ENCODE measurements at regions of chr1 and their contacts with region 1.

Region 1: GRCh38 chr1:234398849-234399381 is 25.7 kb downstream of the COA6 start:
- DNase-seq: no peak
- H3K4me3 Mint-ChIP-seq: peak overlapping the region; percentile 62
- H3K27ac Mint-ChIP-seq: peak overlapping the region; percentile 85
- H3K4me1 Mint-ChIP-seq: peaks cover 49% of the 10 kb centered on the region
- H3K27me3 Mint-ChIP-seq: no peaks in the 10 kb centered on the region

Region 2: GRCh38 chr1:234427950-234428642 is 29.2 kb after region 1 on chr1:
- intact Hi-C with region 1: no loop called
- DNase-seq: no peak
- H3K4me3 Mint-ChIP-seq: no peak overlapping the region
- H3K27ac Mint-ChIP-seq: peak overlapping the region; percentile 49
- H3K4me1 Mint-ChIP-seq: peaks cover 17% of the 10 kb centered on the region
- H3K27me3 Mint-ChIP-seq: no peaks in the 10 kb centered on the region

Region 3: DNA sequence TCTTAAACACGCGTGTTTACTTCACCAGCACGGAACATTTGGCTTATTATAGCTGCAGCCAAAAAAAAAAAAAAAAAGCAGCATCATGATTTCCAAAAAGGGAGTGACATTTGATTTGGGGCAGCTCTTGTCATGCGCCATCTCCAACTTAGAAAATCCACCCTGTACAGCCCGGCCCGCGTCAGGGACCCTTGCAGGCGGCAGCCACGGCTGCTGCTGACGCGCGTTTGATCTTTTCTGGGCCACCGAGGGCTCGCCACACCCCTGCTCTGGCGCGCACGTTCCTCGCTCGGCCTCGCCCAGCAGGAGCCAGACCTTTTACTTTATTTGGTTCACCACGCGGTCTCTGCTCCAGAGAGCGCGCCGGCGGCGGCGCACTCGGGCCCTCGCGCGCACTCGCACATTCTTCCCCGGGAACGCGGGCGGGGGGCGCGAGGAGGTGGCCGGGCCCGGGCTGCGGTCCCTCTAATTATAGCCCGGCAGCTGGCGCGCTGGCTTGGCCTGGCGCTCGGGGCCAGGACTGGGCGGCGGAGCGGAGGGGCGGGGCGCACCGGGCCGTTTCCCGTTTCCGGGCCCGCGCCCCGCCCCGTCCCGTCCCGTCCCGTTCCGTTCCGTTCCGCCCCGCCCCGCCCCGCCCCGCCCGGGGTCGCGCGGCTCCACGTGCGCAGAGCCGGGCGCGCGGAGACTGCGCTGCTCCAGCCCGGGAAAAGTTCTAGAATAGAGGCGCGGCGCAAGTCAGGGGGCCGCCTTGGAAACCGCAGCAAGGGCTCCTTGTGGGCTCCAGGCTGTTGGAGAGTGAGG is 200.9 kb after region 1 on chr1:
- intact Hi-C with region 1: loop called (anchors 10 kb)
- DNase-seq: peak; percentile 70
- H3K4me3 Mint-ChIP-seq: peak overlapping the region; percentile 82
- H3K27ac Mint-ChIP-seq: peak overlapping the region; percentile 92
- H3K4me1 Mint-ChIP-seq: peaks cover 53% of the 10 kb centered on the region
- H3K27me3 Mint-ChIP-seq: no peaks in the 10 kb centered on the region

Measured in activated T-helper 2 cell treated with anti-CD3 and anti-CD28 coated beads, Interferon-gamma antibody, Interleukin-2, Interleukin-4, amounts not matched to agents 10 μg/mL and 5 μg/mL and 100 μg/mL, durations not matched to agents 14 hours and 24 hours and 36 hours (primary cell).